PC-9 (cell line): ENCODE measurements at regions of chr9 and their contacts with region 1.

Region 1: GRCh38 chr9:127224178-127224882 is 40.2 kb upstream of the GARNL3 start:
- DNase-seq: peak; percentile 80 to 97
- H3K4me3 ChIP-seq: peak overlapping the region; percentile 85
- H3K27ac ChIP-seq: 0 out of 2 replicates have a peak overlapping the region, but pooled peaks have one; percentile 36
- H3K4me1 ChIP-seq: no peaks in the 10 kb centered on the region
- H3K27me3 ChIP-seq: no peaks in the 10 kb centered on the region
- CTCF ChIP-seq: no peak

Region 2: GRCh38 chr9:126914458-126915280 is 309.7 kb before region 1 on chr9 and contains the start of gene RALGPS1:
- CTCF ChIA-PET with region 1: no interaction called
- POLR2A ChIA-PET with region 1: interaction called, 10 read pairs
- intact Hi-C with region 1: no loop called
- DNase-seq: peak; percentile 90 to 98
- H3K4me3 ChIP-seq: peak within 1 kb of the TSS; percentile 61
- H3K27ac ChIP-seq: no peak within 1 kb of the TSS
- H3K4me1 ChIP-seq: peaks cover 6% of the 10 kb centered on the region; the same call in 1 of the 2 replicates
- H3K27me3 ChIP-seq: no peaks in the 10 kb centered on the region
- CTCF ChIP-seq: no peak
- total RNA-seq, gene RALGPS1: 23.3 and 25.8 TPM in 2 replicates

Region 3: DNA sequence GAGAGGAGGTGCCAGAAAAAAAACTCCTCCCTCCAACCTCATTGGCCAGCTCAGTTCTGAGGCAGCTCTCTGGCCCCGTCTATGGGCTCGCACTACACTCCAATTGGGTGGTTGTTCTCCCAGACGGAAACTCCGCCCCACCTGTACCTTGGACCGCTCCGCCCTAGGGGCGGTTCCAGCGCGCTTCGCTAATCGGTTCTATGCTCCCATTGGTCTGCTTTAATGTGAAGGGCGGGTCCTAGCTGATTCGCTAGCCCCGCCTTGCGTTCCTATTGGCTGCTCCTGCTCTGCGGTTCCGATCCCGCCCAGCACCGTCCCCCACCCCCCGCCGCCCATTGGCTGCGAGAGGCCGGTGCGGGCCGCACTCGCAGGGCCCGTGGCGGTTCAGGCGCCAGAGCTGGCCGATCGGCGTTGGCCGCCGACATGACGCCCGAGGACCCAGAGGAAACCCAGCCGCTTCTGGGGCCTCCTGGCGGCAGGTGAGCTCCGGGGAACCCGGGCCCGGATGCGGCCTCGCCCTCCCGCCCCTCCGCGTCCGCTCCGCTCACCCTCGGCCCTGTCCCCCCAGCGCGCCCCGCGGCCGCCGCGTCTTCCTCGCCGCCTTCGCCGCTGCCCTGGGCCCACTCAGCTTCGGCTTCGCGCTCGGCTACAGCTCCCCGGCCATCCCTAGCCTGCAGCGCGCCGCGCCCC is 172.6 kb after region 1 on chr9 and contains the start of gene SLC2A8:
- CTCF ChIA-PET with region 1: interaction called, 20 read pairs
- POLR2A ChIA-PET with region 1: interaction called, 31 read pairs
- intact Hi-C with region 1: loop called (anchors 2 kb)
- DNase-seq: peak; percentile 98 to 100
- H3K4me3 ChIP-seq: peak within 1 kb of the TSS; percentile 68
- H3K27ac ChIP-seq: no peak within 1 kb of the TSS
- H3K4me1 ChIP-seq: no peaks in the 10 kb centered on the region; the same call in 1 of the 2 replicates
- H3K27me3 ChIP-seq: no peaks in the 10 kb centered on the region
- CTCF ChIP-seq: 0 out of 2 replicates have a peak, but pooled peaks have one; percentile 12
- total RNA-seq, gene SLC2A8: 19.1 and 24.6 TPM in 2 replicates

Region 4: DNA sequence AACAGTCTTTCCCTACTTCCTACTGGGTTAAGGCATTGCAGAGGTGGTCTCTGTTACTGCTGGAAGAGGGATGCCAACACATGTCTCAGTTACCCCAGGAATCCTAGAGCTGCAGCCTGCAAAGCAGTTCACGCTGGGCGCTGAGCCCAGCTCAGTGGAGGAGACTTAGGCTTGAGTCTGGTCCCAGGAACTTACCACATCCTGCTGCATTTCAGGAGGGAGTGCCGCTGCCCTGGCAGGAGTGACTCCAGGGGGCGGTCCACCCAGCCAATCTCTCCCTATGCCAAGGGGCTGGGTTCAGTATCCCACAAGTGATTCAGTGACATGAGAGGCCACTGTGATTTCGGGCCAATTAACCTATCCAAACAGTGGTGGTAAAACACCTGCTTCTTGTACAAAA is 499.1 kb after region 1 on chr9:
- CTCF ChIA-PET with region 1: no interaction called
- POLR2A ChIA-PET with region 1: no interaction called
- intact Hi-C with region 1: loop called (anchors 10 kb)
- DNase-seq: peak in 1 of 2 experiments; percentile 28
- H3K4me3 ChIP-seq: no peak overlapping the region
- H3K27ac ChIP-seq: no peak overlapping the region
- H3K4me1 ChIP-seq: peaks cover 16% of the 10 kb centered on the region
- H3K27me3 ChIP-seq: no peaks in the 10 kb centered on the region
- CTCF ChIP-seq: no peak

Region 5: GRCh38 chr9:128504485-128505413 is 1280.4 kb after region 1 on chr9 and contains the start of gene GLE1:
- CTCF ChIA-PET with region 1: no interaction called
- POLR2A ChIA-PET with region 1: no interaction called
- intact Hi-C with region 1: no loop called
- DNase-seq: peak; percentile 79 to 97
- H3K4me3 ChIP-seq: peak within 1 kb of the TSS; percentile 94
- H3K27ac ChIP-seq: peak within 1 kb of the TSS; percentile 43
- H3K4me1 ChIP-seq: peaks cover 17% of the 10 kb centered on the region
- H3K27me3 ChIP-seq: no peaks in the 10 kb centered on the region
- CTCF ChIP-seq: no peak
- total RNA-seq, gene GLE1: 67.2 and 74.2 TPM in 2 replicates